ENCODE measurements at regions of chr7 and their contacts with region 1.

Region 1: DNA sequence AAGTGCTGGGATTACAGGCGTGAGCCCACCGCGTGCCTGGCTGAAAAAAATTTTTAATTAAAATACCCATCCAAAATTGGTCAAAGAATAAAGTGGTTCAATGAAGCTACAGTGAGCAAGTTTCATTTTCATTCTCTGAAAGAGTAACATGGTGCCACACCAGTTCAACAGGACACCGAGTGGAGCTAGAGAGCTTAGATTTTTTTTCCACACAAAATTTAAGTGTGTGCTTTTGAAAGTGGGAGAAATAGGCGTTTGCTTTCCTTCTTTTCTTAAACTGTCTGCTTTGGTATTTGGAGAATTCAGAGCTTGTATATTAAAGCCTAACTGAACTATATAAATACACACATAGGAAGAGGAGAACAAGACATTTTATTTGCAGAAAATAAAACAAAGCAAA is 43.4 kb downstream of the BPGM start:
- DNase-seq: peak; percentile 81
- ATAC-seq: peak; percentile 77
- H3K4me3 ChIP-seq: no peak overlapping the region
- H3K27ac ChIP-seq: peak overlapping the region; percentile 70; the same call in 1 of the 2 replicates
- H3K4me1 ChIP-seq: peaks cover 31% of the 10 kb centered on the region
- H3K27me3 ChIP-seq: no peaks in the 10 kb centered on the region
- CTCF ChIP-seq: peak; percentile 77
- POLR2A ChIP-seq: no peak
- RAD21 ChIP-seq: peak; percentile 79

Region 2: GRCh38 chr7:133797818-133798485 is 892.1 kb before region 1 on chr7:
- CTCF ChIA-PET with region 1: no interaction called
- POLR2A ChIA-PET with region 1: no interaction called
- dilution Hi-C with region 1: no loop called
- in situ Hi-C with region 1: no loop called
- intact Hi-C with region 1: no loop called
- DNase-seq: peak; percentile 82
- ATAC-seq: peak; percentile 89
- H3K4me3 ChIP-seq: no peak overlapping the region
- H3K27ac ChIP-seq: peak overlapping the region; percentile 45; the same call in 1 of the 2 replicates
- H3K4me1 ChIP-seq: peaks cover 5% of the 10 kb centered on the region; the same call in 1 of the 2 replicates
- H3K27me3 ChIP-seq: no peaks in the 10 kb centered on the region
- CTCF ChIP-seq: no peak
- POLR2A ChIP-seq: no peak
- RAD21 ChIP-seq: no peak

Region 3: GRCh38 chr7:134741907-134742635 is 52.1 kb after region 1 on chr7:
- CTCF ChIA-PET with region 1: interaction called, 3 read pairs
- POLR2A ChIA-PET with region 1: no interaction called
- dilution Hi-C with region 1: no loop called
- in situ Hi-C with region 1: no loop called
- intact Hi-C with region 1: loop called (anchors 1 kb)
- DNase-seq: peak; percentile 82
- ATAC-seq: peak; percentile 67
- H3K4me3 ChIP-seq: no peak overlapping the region
- H3K27ac ChIP-seq: peak overlapping the region; percentile 95
- H3K4me1 ChIP-seq: peaks cover 19% of the 10 kb centered on the region
- H3K27me3 ChIP-seq: no peaks in the 10 kb centered on the region
- CTCF ChIP-seq: no peak
- POLR2A ChIP-seq: no peak
- RAD21 ChIP-seq: no peak

Region 4: DNA sequence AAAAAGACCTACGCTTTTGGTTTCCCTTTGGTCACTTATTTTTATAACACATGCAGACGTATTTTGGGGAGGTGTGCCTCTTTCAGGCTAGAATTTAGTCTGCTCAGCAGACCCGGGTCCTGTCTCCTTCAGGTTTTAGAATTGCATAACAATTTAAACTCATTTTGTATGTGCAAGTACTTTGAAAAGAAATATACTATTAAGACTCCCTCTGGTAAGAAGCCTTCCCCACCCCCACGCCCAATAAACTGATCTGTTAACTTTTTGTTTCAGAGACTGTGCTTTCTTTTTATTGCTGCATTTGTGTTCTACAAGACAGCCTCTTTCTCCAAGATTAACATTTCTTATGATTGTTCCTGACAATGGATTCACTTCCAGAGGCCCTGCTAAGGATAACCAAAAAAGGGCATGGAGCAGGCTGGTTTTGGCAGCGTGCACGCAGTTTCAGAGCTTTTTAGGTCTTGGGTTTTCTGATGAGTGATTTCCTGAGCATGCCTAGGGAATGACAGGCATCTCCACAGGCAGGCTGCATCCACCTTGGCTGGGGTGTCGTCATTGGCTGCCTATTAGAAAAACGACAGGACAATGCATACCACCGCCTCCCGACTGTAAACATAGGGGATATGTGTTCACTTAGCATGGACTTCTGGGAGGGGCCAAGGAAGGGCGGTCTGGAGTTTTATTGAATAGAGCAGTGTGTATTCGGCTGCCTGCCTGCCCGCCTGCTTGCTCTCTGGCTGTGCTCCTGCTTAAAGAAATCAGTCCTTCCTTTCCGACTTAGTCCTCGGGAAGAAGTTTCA is 89.1 kb after region 1 on chr7 and contains the start of gene CALD1:
- CTCF ChIA-PET with region 1: no interaction called
- POLR2A ChIA-PET with region 1: interaction called, 15 read pairs
- dilution Hi-C with region 1: no loop called
- in situ Hi-C with region 1: loop called (anchors 5 kb)
- intact Hi-C with region 1: loop called (anchors 1 kb)
- DNase-seq: peak; percentile 99
- ATAC-seq: peak; percentile 91
- H3K4me3 ChIP-seq: peak within 1 kb of the TSS; percentile 66
- H3K27ac ChIP-seq: peak within 1 kb of the TSS; percentile 86
- H3K4me1 ChIP-seq: peaks cover 21% of the 10 kb centered on the region
- H3K27me3 ChIP-seq: no peaks in the 10 kb centered on the region
- CTCF ChIP-seq: no peak
- POLR2A ChIP-seq: peak; percentile 98
- RAD21 ChIP-seq: no peak; the same call in 1 of the 2 replicates
- total RNA-seq, gene CALD1: 487 and 532 TPM in 2 replicates

Region 5: DNA sequence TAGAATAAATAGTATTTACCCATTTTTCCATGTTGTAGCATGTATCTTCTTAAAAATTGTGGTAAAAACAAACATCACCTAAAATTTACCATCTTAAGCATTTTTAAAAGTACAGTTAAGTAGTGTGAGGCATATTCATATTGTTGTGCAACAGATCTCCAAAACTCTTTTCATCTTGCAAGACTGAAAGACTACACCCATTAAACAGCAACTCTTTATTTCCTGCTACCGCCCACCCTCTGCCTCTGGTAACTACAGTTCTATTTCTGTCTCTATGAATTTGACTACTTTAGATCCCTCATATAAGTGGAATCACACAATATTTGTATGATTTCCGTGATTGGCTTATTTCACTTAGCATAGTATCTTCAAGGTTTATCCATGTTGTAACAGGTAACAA is 256.2 kb after region 1 on chr7:
- CTCF ChIA-PET with region 1: no interaction called
- POLR2A ChIA-PET with region 1: no interaction called
- dilution Hi-C with region 1: no loop called
- in situ Hi-C with region 1: loop called (anchors 5 kb)
- intact Hi-C with region 1: no loop called
- DNase-seq: peak; percentile 57
- ATAC-seq: no peak
- H3K4me3 ChIP-seq: no peak overlapping the region
- H3K27ac ChIP-seq: no peak overlapping the region
- H3K4me1 ChIP-seq: peaks cover 5% of the 10 kb centered on the region
- H3K27me3 ChIP-seq: no peaks in the 10 kb centered on the region
- CTCF ChIP-seq: no peak
- POLR2A ChIP-seq: no peak
- RAD21 ChIP-seq: no peak

Region 6: GRCh38 chr7:135260930-135261721 is 571.1 kb after region 1 on chr7:
- CTCF ChIA-PET with region 1: no interaction called
- POLR2A ChIA-PET with region 1: no interaction called
- dilution Hi-C with region 1: no loop called
- in situ Hi-C with region 1: loop called (anchors 10 kb)
- intact Hi-C with region 1: no loop called
- DNase-seq: peak; percentile 11
- ATAC-seq: peak; percentile 51
- H3K4me3 ChIP-seq: no peak overlapping the region
- H3K27ac ChIP-seq: no peak overlapping the region
- H3K4me1 ChIP-seq: peaks cover 2% of the 10 kb centered on the region
- H3K27me3 ChIP-seq: peaks cover 14% of the 10 kb centered on the region
- CTCF ChIP-seq: no peak
- POLR2A ChIP-seq: no peak
- RAD21 ChIP-seq: no peak

Region 7: DNA sequence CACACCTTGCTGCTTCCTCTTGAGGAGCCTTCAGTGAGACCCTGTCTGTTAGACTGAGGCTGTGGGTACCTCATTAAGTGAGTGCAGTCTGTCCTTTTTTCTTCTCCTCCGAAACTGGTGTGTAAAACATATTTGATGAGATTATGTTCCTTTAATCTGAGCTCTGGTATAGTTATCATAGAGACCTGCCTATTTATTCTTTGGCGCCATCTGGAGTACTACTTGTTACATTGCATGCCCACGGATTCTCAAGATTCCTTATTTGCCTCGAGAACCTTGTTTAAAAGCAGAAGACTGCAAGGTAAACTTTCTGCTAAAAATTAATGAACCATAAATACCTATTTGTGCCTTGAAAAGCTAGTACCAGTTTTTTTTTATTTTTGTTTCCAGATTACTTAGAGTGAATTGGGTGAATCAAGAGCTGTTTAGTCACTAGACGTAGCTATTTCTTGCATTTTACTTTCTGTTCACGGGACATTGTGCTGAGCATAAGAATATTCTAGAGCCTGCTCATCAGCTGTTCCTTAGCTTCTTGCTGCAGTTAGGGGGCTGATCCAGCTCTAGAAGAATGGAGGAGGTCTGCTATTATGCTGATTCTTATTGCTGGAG is 955.4 kb after region 1 on chr7:
- CTCF ChIA-PET with region 1: no interaction called
- POLR2A ChIA-PET with region 1: no interaction called
- dilution Hi-C with region 1: no loop called
- in situ Hi-C with region 1: no loop called
- intact Hi-C with region 1: loop called (anchors 10 kb)
- DNase-seq: peak; percentile 64
- ATAC-seq: peak; percentile 96
- H3K4me3 ChIP-seq: no peak overlapping the region
- H3K27ac ChIP-seq: no peak overlapping the region
- H3K4me1 ChIP-seq: no peaks in the 10 kb centered on the region
- H3K27me3 ChIP-seq: no peaks in the 10 kb centered on the region
- CTCF ChIP-seq: peak; percentile 79
- POLR2A ChIP-seq: no peak
- RAD21 ChIP-seq: peak; percentile 69

Measured in IMR-90 (cell line).